Right ventricle myocardium superior (tissue), 1 donor: ENCODE measurements at regions of chr7 and their contacts with region 1.

Region 1: GRCh38 chr7:106947244-106947728 is 82.2 kb downstream of the PIK3CG start:
- DNase-seq: no peak
- ATAC-seq: peak; percentile 94

Region 2: DNA sequence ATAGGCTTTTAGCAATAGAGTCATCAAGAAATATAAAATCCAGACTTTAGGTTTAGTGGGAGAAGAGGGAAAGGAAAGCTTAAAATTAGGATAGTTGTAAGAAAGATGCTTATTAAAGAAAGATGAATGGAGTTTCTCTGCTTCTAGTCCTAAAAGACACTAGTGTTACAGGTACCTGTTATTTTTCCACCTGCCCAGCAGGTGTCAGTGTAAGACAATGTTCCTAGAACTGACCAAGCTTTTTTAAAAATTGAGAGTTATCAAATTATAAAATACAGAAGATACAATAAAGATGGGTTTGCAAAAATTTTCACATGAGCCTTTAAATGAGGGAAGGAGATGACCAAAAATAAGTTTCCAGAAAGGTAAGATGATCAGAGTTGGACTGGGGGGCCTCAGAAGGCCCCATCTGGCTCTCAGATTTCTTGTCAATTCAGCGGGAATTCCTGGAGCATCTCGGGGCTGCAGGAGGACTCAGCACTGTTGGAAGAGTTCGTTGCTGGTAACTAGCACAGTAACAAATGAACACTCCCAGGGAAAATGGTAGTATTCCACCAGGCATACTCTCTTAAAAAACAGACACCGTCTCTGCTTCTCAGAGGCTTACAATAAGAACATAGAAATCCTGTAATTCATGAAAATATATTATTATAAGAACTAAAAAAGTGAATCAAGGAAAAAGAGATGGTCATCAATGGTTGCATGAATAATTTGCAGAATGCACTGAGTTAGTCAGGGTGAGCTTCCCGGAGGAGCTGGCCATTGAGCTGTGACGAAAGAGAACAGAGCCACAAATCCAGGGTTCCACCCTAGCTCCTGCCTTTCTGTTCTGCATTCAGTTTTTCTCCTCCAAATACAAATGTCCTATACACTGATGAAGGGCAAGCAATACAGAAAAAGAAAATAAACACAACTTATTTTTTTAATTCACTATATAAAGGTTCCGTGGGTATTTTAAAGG is 154.0 kb before region 1 on chr7:
- intact Hi-C with region 1: loop called (anchors 10 kb)
- DNase-seq: no peak
- ATAC-seq: peak; percentile 48

Region 3: GRCh38 chr7:107150375-107151073 is 203.2 kb after region 1 on chr7:
- intact Hi-C with region 1: loop called (anchors 1 kb)
- DNase-seq: peak; percentile 81
- ATAC-seq: peak; percentile 87